ENCODE measurements at regions of chr18 and their contacts with region 1.

Region 1: DNA sequence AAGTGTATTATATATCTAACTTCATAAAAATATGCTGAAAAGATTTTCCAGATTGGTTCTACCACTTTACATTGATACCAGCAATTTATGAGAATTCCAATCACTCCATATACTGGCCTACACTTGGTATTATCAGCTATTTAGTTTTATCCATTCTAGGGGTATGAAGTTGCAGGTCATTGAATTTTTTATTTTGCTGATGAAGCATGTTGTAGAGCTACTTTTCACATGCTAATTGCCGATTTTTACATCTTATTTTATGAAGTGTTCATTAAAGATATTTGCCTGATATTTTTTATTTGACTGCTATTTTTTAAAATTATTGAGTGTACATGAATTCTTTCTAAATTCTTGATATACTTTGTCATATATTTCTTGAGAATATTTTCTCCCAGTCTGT is 542.1 kb downstream of the ADCYAP1 start:
- DNase-seq: no peak
- ATAC-seq: no peak
- H3K4me3 ChIP-seq: no peak overlapping the region
- H3K4me3 Mint-ChIP-seq: no peak overlapping the region
- H3K27ac ChIP-seq: no peak overlapping the region
- H3K27ac Mint-ChIP-seq: no peak overlapping the region
- H3K4me1 ChIP-seq: no peaks in the 10 kb centered on the region
- H3K4me1 Mint-ChIP-seq: no peaks in the 10 kb centered on the region
- H3K27me3 ChIP-seq: no peaks in the 10 kb centered on the region
- H3K27me3 Mint-ChIP-seq: no peaks in the 10 kb centered on the region
- CTCF ChIP-seq: no peak

Region 2: GRCh38 chr18:1383464-1383863 is 63.3 kb before region 1 on chr18:
- CTCF ChIA-PET with region 1: no interaction called
- POLR2A ChIA-PET with region 1: no interaction called
- intact Hi-C with region 1: loop called (anchors 10 kb)
- DNase-seq: no peak
- ATAC-seq: no peak
- H3K4me3 ChIP-seq: no peak overlapping the region
- H3K4me3 Mint-ChIP-seq: no peak overlapping the region
- H3K27ac ChIP-seq: no peak overlapping the region
- H3K27ac Mint-ChIP-seq: no peak overlapping the region
- H3K4me1 ChIP-seq: no peaks in the 10 kb centered on the region
- H3K4me1 Mint-ChIP-seq: no peaks in the 10 kb centered on the region
- H3K27me3 ChIP-seq: no peaks in the 10 kb centered on the region
- H3K27me3 Mint-ChIP-seq: no peaks in the 10 kb centered on the region
- CTCF ChIP-seq: no peak